ENCODE measurements at regions of chr3 and their contacts with region 1.

Region 1: DNA sequence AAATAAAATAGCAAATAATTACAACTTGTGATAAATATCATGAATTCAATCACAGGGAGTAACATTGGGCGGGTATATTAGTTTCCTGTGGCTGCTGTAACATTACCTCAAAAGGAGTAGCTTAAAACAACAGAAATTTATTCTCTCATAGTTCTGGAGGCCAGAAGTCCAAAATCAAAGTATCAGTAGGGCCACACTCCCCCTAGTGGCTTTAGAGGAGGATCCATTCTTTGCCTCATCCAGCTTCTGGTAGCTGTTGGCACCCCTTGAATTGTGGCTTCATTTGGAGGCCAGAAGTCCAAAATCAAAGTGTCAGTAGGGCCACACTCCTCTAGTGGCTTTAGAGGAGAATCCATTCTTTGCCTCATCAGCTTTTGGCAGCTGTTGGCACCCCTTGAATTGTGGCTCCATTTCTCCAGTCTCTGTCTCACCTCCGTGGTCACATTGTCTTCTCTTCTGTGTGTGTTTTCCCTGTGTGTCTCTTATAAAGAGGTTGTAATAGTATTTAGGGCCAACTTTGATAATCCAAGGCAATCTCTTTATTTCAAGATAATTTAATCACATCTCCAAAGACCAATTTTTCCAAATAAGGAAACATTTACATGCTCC is 3.1 kb upstream of the CFAP20DC start:
- DNase-seq: peak; percentile 3
- H3K4me3 ChIP-seq: no peak overlapping the region
- H3K27ac ChIP-seq: no peak overlapping the region
- H3K27me3 ChIP-seq: no peaks in the 10 kb centered on the region
- CTCF ChIP-seq: peak; percentile 76

Region 2: DNA sequence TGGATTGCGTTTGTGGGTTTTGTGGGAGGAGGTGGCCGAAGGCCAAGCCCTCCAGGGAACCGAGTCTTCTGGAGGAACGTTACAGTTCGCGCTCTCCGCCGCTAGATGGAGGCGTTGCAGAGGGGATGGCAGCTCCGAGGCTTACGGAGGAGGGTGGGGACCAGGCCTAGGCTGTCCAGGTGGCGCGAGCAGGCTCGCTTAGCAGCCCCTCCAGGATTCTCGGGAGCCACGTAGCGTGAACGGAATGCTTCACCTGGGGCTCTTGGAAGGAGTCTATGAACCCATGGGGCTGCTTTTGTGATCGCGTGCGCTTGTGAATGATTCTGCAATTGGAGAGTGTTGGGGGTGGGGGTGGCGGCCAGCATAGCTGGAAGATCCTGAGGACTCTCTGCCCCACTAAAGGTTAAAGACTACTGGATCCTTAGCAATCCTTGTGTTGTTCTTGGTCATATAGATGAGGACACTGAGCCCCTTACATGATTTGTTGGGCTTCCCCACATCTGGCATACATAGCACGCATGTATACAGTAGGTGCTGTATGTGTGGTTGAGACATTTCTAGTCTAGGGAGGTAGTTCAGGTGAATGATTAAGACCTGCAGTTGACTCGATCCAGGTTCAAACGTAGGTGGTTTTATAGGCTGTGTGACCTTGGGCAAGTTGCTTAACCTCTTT is 412.1 kb before region 1 on chr3:
- CTCF ChIA-PET with region 1: interaction called, 51 read pairs
- POLR2A ChIA-PET with region 1: no interaction called
- DNase-seq: peak; percentile 50
- H3K4me3 ChIP-seq: no peak overlapping the region
- H3K27ac ChIP-seq: no peak overlapping the region
- H3K27me3 ChIP-seq: no peaks in the 10 kb centered on the region
- CTCF ChIP-seq: peak; percentile 95

Region 3: GRCh38 chr3:58824285-58824684 is 228.6 kb before region 1 on chr3:
- CTCF ChIA-PET with region 1: interaction called, 41 read pairs
- POLR2A ChIA-PET with region 1: no interaction called
- DNase-seq: peak; percentile 33
- H3K4me3 ChIP-seq: no peak overlapping the region
- H3K27ac ChIP-seq: no peak overlapping the region
- H3K27me3 ChIP-seq: no peaks in the 10 kb centered on the region
- CTCF ChIP-seq: peak; percentile 88

Region 4: DNA sequence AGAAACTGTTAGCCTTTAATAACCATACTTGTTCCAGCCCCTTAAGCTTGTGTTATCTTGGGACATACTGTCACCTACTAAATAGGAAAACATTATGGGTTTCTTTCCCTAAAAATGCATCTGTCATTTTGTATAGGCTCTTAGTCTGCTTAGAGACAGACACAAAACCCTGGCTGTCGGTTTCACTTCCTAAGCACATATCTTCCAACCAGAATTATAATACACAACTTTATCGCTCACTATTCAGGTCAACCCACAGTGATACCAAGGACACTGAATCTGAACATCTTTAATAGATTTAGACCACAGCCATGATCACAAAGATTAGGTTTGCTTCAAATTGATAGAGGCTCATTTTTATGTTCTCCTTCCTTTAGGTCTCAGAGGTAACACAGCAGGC is 114.8 kb before region 1 on chr3:
- CTCF ChIA-PET with region 1: no interaction called
- POLR2A ChIA-PET with region 1: no interaction called
- DNase-seq: no peak
- H3K4me3 ChIP-seq: no peak overlapping the region
- H3K27ac ChIP-seq: no peak overlapping the region
- H3K27me3 ChIP-seq: no peaks in the 10 kb centered on the region
- CTCF ChIP-seq: no peak

Region 5: GRCh38 chr3:58994746-58995330 is 58.1 kb before region 1 on chr3:
- CTCF ChIA-PET with region 1: interaction called, 48 read pairs
- POLR2A ChIA-PET with region 1: no interaction called
- DNase-seq: peak; percentile 38
- H3K4me3 ChIP-seq: no peak overlapping the region
- H3K27ac ChIP-seq: no peak overlapping the region
- H3K27me3 ChIP-seq: no peaks in the 10 kb centered on the region
- CTCF ChIP-seq: peak; percentile 92

Region 6: GRCh38 chr3:59064276-59064675 is 11.4 kb after region 1 on chr3:
- CTCF ChIA-PET with region 1: interaction called, 10 read pairs
- POLR2A ChIA-PET with region 1: no interaction called
- DNase-seq: no peak
- H3K4me3 ChIP-seq: no peak overlapping the region
- H3K27ac ChIP-seq: no peak overlapping the region
- H3K27me3 ChIP-seq: no peaks in the 10 kb centered on the region
- CTCF ChIP-seq: no peak

Region 7: DNA sequence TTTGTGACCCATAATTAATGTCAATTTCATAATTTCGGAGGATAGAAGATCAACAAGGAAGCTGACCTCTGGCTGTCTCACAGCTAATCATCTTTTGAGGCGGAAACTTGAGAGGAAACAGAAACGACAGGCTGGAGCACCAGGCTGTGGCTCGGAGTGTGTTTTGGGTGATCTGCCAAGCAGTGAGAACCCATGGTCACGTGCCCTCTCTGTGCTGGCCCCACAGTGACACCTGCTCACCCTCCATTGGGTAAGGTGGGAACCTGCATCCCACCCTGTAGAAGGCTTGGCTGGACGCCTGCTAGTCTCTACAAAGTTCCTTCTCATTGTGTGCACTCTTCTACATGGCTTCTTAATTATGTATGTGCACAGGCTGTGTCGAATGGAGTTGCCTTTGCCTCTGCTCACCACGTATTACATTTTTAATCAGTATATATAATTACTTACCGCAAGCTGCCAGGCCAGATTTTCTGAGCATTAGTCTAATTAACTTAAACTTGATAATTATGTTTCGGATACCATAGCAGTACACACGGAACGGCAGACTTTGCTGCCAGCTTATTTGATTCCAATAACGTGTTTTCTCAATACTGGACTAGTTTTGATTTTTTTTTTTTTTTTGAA is 716.3 kb after region 1 on chr3:
- CTCF ChIA-PET with region 1: interaction called, 10 read pairs
- POLR2A ChIA-PET with region 1: no interaction called
- DNase-seq: no peak
- H3K4me3 ChIP-seq: no peak overlapping the region
- H3K27ac ChIP-seq: no peak overlapping the region
- H3K27me3 ChIP-seq: no peaks in the 10 kb centered on the region
- CTCF ChIP-seq: no peak